Psoas muscle (tissue), 8 donors: ENCODE measurements at regions of chr7 and their contacts with region 1.

Region 1: DNA sequence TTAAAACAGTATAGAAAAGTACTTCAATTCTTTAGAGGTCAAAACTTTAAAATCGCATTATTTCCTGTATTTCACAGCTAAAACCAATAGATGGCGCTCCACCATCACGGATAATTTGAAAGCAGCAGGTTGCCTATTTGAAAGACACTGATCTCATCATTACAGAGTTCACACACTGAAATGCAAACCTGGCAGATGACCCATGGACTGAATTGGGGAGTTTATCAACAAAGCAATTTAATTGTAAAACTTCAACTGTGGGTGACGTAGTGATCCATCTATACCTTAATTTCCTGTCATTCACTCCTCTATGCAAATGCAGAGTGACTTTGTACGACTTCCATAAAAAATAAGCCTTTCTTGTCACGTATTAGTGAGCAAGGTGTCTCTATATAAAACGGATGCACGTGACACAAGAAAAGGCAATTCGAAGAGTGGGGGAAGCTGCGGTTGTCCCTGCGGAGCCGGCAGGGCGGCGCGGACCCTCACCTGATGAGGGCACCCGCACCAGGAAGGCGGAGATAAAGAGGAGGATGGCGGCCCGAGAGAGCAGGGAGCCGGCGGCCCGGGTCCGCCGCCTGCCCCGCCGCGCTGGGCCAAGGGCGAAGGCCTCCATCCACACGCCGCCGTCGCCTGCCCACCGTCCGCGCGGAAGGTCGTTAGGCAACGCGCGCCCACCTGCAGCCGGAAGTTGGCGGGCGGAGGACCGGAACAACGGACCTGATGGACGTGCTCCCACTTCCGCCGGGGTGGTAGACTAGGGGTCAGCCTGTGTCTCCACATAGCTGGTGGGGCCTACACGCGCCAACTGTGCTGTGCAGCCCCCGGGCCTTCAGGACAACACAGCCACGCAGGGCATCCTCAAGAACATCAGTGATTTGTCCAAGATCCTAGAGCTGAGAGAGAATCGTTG is at the start of gene ZPBP:
- DNase-seq: peak; percentile 18 to 51
- ATAC-seq: peak in 1 of 4 donors; percentile 61
- H3K4me3 ChIP-seq: peak within 1 kb of the TSS; percentile 56
- H3K27ac ChIP-seq: no peak within 1 kb of the TSS
- H3K4me1 ChIP-seq: no peaks in the 10 kb centered on the region
- H3K27me3 ChIP-seq: peaks cover 0 to 4% (median 2%) of the 10 kb centered on the region in 3 donors
- CTCF ChIP-seq: peak; percentile 70
- total RNA-seq, gene ZPBP: not detected

Region 2: GRCh38 chr7:50125766-50126165 is 32.9 kb after region 1 on chr7:
- intact Hi-C with region 1: no loop called
- DNase-seq: no peak
- ATAC-seq: no peak
- H3K4me3 ChIP-seq: no peak overlapping the region
- H3K27ac ChIP-seq: no peak overlapping the region
- H3K4me1 ChIP-seq: no peaks in the 10 kb centered on the region
- H3K27me3 ChIP-seq: peaks cover 0 to 2% (median under 1%) of the 10 kb centered on the region in 3 donors
- CTCF ChIP-seq: no peak

Region 3: DNA sequence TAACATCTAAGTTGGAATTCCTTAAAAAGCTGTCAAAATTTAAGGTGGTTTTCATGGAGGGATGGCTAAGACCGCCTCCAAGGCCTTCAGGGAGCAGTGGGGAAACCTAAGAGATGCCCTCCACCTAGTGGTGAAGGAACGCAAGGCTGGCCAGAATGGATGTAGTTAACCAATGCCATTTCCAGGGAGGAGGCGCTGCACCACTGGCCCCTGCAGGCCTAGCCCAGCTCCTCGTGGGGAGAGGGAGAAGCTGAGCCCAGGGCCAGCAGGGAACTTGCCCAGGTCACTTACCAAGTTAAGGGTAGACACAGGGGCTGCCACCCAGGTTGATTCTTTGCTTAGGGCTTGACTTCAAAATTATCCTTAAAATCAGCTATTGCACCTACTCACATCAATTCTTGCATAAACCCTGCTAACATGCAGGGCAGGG is 325.3 kb after region 1 on chr7:
- intact Hi-C with region 1: loop called in 1 of 2 experiments (anchors 2 kb)
- DNase-seq: peak; percentile 50 to 68
- ATAC-seq: peak; percentile 66 to 86 (median 79)
- H3K4me3 ChIP-seq: no peak overlapping the region
- H3K27ac ChIP-seq: no peak overlapping the region
- H3K4me1 ChIP-seq: no peaks in the 10 kb centered on the region
- H3K27me3 ChIP-seq: no peaks in the 10 kb centered on the region
- CTCF ChIP-seq: peak; percentile 66

Region 4: GRCh38 chr7:51162724-51163329 is 1070.0 kb after region 1 on chr7:
- intact Hi-C with region 1: loop called in 1 of 2 experiments (anchors 5 kb)
- DNase-seq: peak in 1 of 2 donors; percentile 37
- ATAC-seq: peak; percentile 84 to 94 (median 90)
- H3K4me3 ChIP-seq: no peak overlapping the region
- H3K27ac ChIP-seq: no peak overlapping the region
- H3K4me1 ChIP-seq: peaks cover 12% of the 10 kb centered on the region
- H3K27me3 ChIP-seq: no peaks in the 10 kb centered on the region
- CTCF ChIP-seq: peak; percentile 83